ENCODE measurements at regions of chr22 and their contacts with region 1.

Region 1: GRCh38 chr22:24046024-24046423 is 34.9 kb downstream of the CABIN1 start:
- DNase-seq: no peak
- H3K4me3 ChIP-seq: no peak overlapping the region
- H3K27ac ChIP-seq: no peak overlapping the region
- H3K4me1 ChIP-seq: no peaks in the 10 kb centered on the region
- H3K27me3 ChIP-seq: no peaks in the 10 kb centered on the region
- CTCF ChIP-seq: no peak

Region 2: GRCh38 chr22:24060375-24060788 is 14.4 kb after region 1 on chr22:
- CTCF ChIA-PET with region 1: no interaction called
- dilution Hi-C with region 1: no loop called
- in situ Hi-C with region 1: no loop called
- intact Hi-C with region 1: no loop called
- DNase-seq: peak; percentile 44
- H3K4me3 ChIP-seq: no peak overlapping the region
- H3K27ac ChIP-seq: no peak overlapping the region
- H3K4me1 ChIP-seq: peaks cover 7% of the 10 kb centered on the region
- H3K27me3 ChIP-seq: no peaks in the 10 kb centered on the region
- CTCF ChIP-seq: no peak

Region 3: DNA sequence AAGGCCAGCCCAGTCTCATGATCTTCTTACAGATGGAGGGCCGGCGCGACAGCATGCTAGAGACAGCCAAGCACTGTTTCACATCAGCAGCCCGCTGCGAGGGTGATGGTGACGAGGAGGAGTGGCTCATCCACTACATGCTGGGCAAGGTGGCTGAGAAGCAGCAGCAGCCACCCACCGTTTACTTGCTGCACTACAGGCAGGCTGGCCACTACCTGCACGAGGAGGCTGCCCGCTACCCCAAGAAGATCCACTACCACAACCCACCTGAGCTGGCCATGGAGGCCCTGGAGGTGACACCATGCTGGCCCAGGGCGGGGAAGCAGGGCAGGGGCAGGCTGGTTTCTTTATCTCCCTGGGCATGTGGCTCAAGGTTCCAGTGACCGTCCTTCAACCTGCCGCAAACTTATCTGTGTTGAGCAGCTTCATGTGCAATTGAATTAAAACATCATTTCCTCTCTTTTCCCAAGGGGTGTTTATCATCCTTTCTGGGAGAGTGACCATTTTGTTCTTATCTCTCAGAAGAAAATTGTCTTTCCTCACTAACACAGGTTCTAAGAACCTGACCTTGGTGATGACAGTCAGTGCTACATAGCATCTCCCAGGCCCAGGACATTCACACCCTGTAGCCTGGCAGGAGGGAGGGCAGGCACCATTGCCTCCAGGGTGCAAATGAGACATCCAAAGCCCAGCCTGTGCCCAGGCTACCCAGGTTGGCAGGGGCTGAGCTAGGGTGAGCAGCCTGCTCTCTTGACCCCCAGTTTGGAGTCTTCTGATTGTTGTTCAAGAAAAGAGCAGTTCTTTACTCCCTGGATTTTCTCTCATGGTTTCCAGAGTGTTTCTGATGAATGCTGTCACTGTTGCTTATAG is 45.8 kb after region 1 on chr22:
- CTCF ChIA-PET with region 1: no interaction called
- dilution Hi-C with region 1: loop called (anchors 5 kb)
- in situ Hi-C with region 1: no loop called
- intact Hi-C with region 1: no loop called
- DNase-seq: no peak
- H3K4me3 ChIP-seq: no peak overlapping the region
- H3K27ac ChIP-seq: no peak overlapping the region
- H3K4me1 ChIP-seq: no peaks in the 10 kb centered on the region
- H3K27me3 ChIP-seq: no peaks in the 10 kb centered on the region
- CTCF ChIP-seq: no peak

Region 4: DNA sequence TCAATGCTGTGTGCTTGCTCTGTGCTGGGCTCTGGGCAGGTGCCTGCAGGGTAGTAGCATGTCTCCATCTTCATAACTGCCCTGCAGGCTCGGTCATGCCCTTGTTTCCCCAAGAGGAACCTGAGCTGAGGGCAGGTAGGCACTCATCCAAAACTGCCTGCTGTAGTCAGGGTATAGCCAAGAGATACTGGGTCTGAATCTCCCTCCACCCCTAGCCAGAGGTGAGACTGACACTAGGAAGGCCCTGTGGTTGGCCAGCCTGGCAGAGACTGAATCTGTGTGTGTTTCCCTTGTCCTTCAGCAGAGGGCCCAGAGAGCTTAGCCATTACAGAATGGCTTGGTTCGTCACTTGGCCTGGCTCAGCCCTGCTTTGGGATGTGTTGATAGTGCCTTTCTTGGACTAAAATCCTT is 55.9 kb after region 1 on chr22:
- CTCF ChIA-PET with region 1: no interaction called
- dilution Hi-C with region 1: no loop called
- in situ Hi-C with region 1: no loop called
- intact Hi-C with region 1: no loop called
- DNase-seq: no peak
- H3K4me3 ChIP-seq: no peak overlapping the region
- H3K27ac ChIP-seq: no peak overlapping the region
- H3K4me1 ChIP-seq: no peaks in the 10 kb centered on the region
- H3K27me3 ChIP-seq: no peaks in the 10 kb centered on the region
- CTCF ChIP-seq: peak in 1 of 2 donors; percentile 6

Region 5: GRCh38 chr22:24156913-24157821 is 111.1 kb after region 1 on chr22:
- CTCF ChIA-PET with region 1: no interaction called
- dilution Hi-C with region 1: no loop called
- in situ Hi-C with region 1: no loop called
- intact Hi-C with region 1: no loop called
- DNase-seq: peak; percentile 74
- H3K4me3 ChIP-seq: peak overlapping the region in 2 of 3 experiments; percentile 34 to 50
- H3K27ac ChIP-seq: no peak overlapping the region
- H3K4me1 ChIP-seq: peaks cover 30% of the 10 kb centered on the region
- H3K27me3 ChIP-seq: no peaks in the 10 kb centered on the region
- CTCF ChIP-seq: peak; percentile 76 to 81

Measured in mammary epithelial cell (primary cell).